ENCODE measurements at regions of chr9 and their contacts with region 1.

Region 1: DNA sequence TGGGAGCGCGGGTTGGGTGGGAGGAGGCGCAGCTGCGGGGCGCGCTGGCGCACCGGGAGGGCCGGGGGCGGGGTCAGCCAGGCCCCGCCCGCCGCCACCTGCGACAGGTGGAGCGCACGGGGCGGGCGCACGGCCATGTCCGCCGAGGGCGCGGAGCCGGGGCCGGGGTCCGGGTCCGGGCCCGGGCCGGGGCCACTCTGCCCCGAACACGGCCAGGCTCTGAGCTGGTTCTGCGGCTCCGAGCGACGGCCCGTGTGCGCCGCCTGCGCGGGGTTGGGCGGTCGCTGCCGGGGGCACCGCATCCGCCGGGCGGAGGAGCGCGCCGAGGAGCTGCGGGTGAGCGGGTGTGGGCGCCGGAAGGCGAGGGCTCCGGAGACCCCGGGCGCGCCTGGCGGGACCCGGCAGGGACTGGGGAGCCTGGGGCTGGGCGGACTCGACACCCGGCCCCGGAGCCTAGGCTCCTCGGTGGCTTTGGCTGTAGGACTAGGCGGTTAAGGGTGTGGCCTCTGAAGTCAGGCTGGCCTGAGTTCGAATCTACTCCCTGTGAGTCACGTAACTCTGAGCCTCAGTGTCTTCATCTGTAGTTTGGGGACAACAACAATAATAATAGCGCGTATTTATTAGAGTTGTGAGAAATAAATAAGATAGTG is at the start of gene BSPRY:
- DNase-seq: no peak
- H3K4me3 ChIP-seq: peak within 1 kb of the TSS in 2 of 3 experiments; percentile 13 to 49
- H3K27ac ChIP-seq: no peak within 1 kb of the TSS
- H3K4me1 ChIP-seq: peaks cover 3% of the 10 kb centered on the region
- H3K27me3 ChIP-seq: peaks cover 18% of the 10 kb centered on the region
- CTCF ChIP-seq: no peak
- total RNA-seq, gene BSPRY: 0.16 to 0.17 TPM

Region 2: GRCh38 chr9:113281356-113281755 is 68.2 kb before region 1 on chr9:
- CTCF ChIA-PET with region 1: no interaction called
- dilution Hi-C with region 1: loop called (anchors 5 kb)
- in situ Hi-C with region 1: no loop called
- intact Hi-C with region 1: no loop called
- DNase-seq: no peak
- H3K4me3 ChIP-seq: no peak overlapping the region
- H3K27ac ChIP-seq: no peak overlapping the region
- H3K4me1 ChIP-seq: peaks cover 5% of the 10 kb centered on the region
- H3K27me3 ChIP-seq: no peaks in the 10 kb centered on the region
- CTCF ChIP-seq: no peak

Measured in mammary epithelial cell (primary cell).